ENCODE measurements at regions of chr7 and their contacts with region 1.

Region 1: GRCh38 chr7:49776994-49777393 is 3.6 kb downstream of the VWC2 start:
- DNase-seq: peak in 1 of 2 experiments; percentile 75
- H3K4me3 ChIP-seq: no peak overlapping the region
- H3K27ac ChIP-seq: no peak overlapping the region
- H3K4me1 ChIP-seq: peaks cover 0 to 3% (median 0%) of the 10 kb centered on the region in 4 experiments; a peak in 2 of 7 replicates
- H3K27me3 ChIP-seq: peaks cover 25 to 50% (median 47%) of the 10 kb centered on the region in 4 experiments
- CTCF ChIP-seq: peak; percentile 69 to 86 (median 73)
- EP300 ChIP-seq: no peak
- POLR2A ChIP-seq: no peak
- RAD21 ChIP-seq: peak; percentile 58 to 74

Region 2: GRCh38 chr7:49762666-49763065 is 14.3 kb before region 1 on chr7:
- CTCF ChIA-PET with region 1: interaction called, 10 read pairs
- POLR2A ChIA-PET with region 1: no interaction called
- DNase-seq: no peak
- H3K4me3 ChIP-seq: no peak overlapping the region
- H3K27ac ChIP-seq: no peak overlapping the region
- H3K4me1 ChIP-seq: no peaks in the 10 kb centered on the region
- H3K27me3 ChIP-seq: no peaks in the 10 kb centered on the region
- CTCF ChIP-seq: no peak
- EP300 ChIP-seq: no peak
- POLR2A ChIP-seq: no peak
- RAD21 ChIP-seq: no peak

Region 3: DNA sequence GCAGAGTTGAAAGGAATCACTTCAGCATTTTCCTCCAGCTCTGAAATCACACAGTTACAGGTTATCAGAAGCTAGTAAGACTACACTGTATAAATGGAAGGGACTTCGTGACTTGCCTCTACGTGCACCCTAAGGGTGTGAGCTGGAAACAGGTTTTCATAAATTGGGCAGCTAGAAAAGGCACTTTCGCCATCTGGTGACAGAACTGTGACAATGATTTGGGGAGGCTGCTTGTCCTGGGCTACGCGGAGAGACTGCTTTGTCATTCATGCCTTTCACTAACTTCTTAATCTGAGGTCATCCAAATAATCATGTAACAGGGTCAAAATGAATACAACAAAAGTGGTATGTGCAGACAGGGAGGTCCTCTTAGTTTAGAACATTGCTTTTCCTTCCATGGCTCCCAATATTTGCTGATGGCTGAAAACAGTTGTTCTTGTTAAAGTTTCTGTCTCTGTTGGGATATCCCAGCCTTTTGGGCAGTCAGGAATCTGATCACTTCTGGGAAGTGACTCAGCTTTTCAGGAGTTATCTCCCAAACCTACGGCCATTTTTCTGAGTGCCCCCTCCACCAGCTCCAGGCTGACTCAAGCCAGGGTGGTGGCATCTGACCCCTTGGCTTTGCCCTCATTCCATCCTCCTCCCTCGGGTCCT is 14.2 kb after region 1 on chr7:
- CTCF ChIA-PET with region 1: interaction called, 31 read pairs
- POLR2A ChIA-PET with region 1: interaction called, 3 read pairs
- DNase-seq: peak in 1 of 2 experiments; percentile 43
- H3K4me3 ChIP-seq: no peak overlapping the region
- H3K27ac ChIP-seq: no peak overlapping the region
- H3K4me1 ChIP-seq: peaks cover 0 to 7% (median 2%) of the 10 kb centered on the region in 4 experiments; a peak in 1 of 7 replicates
- H3K27me3 ChIP-seq: no peaks in the 10 kb centered on the region
- CTCF ChIP-seq: peak; percentile 48 to 69 (median 54); a peak in 3 of 4 replicates
- EP300 ChIP-seq: no peak
- POLR2A ChIP-seq: no peak
- RAD21 ChIP-seq: peak; percentile 81 to 86